Cardiac septum (tissue), 1 donor: ENCODE measurements at regions of chr2 and their contacts with region 1.

Region 1: GRCh38 chr2:181262782-181263181 is 194.4 kb upstream of the ITGA4 start:
- DNase-seq: no peak

Region 2: GRCh38 chr2:181252262-181253148 is 10.3 kb before region 1 on chr2:
- intact Hi-C with region 1: loop called (anchors 1 kb)
- DNase-seq: no peak

Region 3: GRCh38 chr2:181281206-181281832 is 18.5 kb after region 1 on chr2:
- intact Hi-C with region 1: no loop called
- DNase-seq: no peak

Region 4: DNA sequence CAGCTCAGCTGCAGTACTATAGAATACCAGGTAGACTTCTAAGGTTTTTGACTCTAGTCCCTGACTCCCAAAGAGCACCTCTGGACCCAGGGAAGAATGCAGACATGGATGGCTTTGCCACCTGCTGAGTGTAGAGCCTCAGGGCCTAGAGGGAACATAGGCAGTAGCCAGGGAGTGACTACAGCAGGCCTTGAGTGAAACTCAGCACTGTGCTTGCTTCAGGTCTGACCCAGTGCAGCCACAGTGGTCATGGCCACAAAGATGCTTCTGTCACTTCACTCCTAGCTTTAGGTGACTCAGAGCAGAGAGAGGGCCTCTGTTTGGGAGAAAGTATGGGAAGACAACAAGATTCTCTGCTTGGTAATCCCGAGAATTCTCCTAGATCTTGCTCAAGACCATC is 32.2 kb after region 1 on chr2:
- intact Hi-C with region 1: no loop called
- DNase-seq: no peak